ENCODE measurements at regions of chr5 and their contacts with region 1.

Region 1: GRCh38 chr5:179697993-179698934 is 503 bp upstream of the CANX start:
- DNase-seq: peak; percentile 98 to 100 (median 99)

Region 2: GRCh38 chr5:179568721-179569120 is 129.5 kb before region 1 on chr5:
- intact Hi-C with region 1: no loop called
- DNase-seq: no peak

Region 3: DNA sequence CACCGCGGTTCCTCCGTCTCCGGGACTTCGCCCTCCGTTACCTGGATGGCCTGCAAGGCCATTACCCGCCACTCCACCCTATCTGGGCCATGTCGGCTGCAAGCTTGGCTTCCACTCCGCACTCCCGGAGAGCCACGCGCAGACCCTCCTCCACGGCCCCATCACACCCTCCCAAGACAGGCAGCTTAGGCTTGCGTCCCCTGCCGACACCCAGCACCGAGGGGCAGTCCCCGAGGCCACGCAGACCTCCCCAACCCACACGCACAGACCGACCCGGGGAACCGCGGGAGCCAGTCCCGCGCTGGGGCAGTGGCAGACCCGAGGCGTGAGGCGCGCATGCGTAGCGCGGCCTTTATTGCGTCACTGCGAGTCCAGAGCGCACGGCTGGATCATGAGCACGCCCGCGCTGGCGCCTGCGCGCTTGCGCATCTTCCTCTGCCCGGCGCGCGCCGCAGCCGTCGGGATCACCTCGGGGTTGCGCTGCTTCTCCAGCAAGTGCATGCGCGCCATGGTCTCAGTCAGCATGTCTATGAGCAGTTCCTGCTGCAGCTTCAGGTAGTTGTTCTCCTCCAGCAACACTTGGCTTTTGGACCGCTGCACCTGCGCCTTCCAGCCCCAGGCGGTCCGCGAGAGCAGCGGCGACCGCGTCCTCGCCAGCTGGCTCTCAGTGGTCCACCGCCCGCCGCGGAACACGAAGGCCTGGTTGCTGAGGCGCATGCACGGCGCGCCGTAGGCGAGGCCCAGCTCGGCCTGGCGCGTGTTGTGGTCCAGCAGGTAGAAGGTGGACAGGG is 19.8 kb before region 1 on chr5:
- intact Hi-C with region 1: loop called (anchors 1 kb)
- DNase-seq: peak; percentile 85 to 99 (median 94)

Region 4: GRCh38 chr5:179732417-179732917 is 34.2 kb after region 1 on chr5 and contains the start of gene MAML1:
- intact Hi-C with region 1: loop called (anchors 1 kb)
- DNase-seq: peak; percentile 100